ENCODE measurements at regions of chr4 and their contacts with region 1.

Region 1: DNA sequence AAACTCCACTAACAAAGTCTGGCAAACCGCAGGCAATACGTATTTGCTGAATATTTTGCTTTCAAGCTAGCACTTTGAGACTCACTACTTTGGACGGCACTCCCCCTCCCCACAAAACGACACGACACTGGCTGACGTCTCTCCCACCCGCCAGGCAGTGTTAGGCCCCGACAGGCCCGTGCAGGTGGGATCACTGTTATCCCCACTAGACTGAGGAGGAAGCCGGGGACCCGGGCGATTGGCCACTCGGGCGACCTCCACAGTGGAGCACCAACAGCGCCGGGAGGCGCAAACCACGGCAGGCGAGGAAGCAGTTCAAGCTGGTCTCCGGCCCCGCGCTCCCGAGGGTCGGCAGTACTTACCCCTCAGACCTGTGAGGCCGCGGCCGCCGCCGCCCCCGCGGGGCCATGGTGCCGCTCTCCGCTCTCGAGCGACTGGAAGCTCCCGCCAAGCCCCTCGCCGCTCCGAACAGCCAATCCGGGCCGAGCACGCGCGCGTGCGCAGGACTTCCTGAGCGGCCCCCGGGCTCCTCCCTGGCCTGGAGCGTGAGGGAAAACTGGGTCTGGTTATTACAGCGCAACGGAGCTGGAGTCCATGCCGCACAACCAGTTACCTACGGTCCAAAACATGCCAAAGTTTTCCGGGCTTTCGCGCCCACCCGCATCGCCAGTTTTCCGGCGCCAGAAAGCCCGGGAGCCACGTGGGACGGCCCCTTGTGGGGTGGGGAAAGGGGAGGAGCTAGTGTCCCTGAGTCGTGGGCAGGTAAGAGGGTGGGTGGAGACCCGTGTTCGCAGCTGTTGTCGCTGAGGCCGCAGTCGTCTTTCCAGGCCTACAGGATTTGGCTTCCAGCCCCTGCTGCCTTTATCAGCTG is at the start of gene CENPU:
- DNase-seq: peak; percentile 89 to 98 (median 94)
- ATAC-seq: peak; percentile 98
- H3K4me3 ChIP-seq: peak within 1 kb of the TSS; percentile 82
- H3K4me3 Mint-ChIP-seq: peak within 1 kb of the TSS; percentile 84 to 98 (median 89)
- H3K27ac ChIP-seq: peak within 1 kb of the TSS; percentile 66
- H3K27ac Mint-ChIP-seq: peak within 1 kb of the TSS; percentile 60 to 96 (median 89)
- H3K4me1 ChIP-seq: peaks cover 7 to 11% of the 10 kb centered on the region in 2 donors
- H3K4me1 Mint-ChIP-seq: peaks cover 4 to 50% (median 20%) of the 10 kb centered on the region in 7 donors
- H3K27me3 ChIP-seq: no peaks in the 10 kb centered on the region
- H3K27me3 Mint-ChIP-seq: no peaks in the 10 kb centered on the region
- total RNA-seq, gene CENPU: 1.1 to 43.8 (median 3.1) TPM

Region 2: DNA sequence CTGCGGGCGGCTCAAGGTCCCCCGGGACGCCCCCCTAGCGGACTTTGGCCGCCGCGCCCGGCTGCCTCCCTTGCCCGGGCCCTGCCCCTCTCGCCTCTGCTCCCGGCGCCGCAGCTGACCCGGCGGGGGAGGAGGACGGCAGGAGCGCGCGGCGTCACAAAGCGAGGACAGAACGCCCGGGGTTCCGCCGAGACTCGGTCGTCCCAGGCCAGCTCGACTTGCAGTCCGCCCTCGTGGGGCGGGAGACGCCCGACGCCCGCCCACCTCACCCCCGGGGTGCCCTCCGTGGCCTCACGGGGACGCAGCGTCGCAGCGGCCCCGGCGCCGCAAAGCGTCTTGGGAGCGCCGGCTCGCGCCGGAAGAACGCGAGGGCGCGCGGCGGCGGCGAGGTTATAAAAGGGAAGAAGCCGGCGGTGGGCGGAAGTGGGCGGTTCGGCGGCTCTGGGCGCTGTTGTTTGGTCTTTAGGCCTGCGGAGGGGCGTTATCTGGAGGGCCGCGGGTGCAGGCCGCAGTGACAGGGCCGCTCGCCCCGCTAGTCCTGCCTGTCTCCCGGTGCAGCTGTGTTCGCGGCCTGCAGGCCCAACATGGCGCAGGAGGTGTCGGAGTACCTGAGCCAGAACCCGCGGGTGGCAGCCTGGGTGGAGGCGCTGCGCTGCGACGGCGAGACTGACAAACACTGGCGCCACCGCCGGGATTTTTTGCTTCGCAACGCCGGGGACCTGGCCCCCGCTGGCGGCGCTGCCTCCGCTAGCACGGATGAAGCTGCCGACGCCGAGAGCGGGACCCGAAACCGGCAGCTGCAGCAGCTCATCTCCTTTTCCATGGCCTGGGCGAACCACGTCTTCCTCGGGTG is 1289.4 kb before region 1 on chr4 and contains the start of gene CDKN2AIP:
- CTCF ChIA-PET with region 1: no interaction called
- POLR2A ChIA-PET with region 1: no interaction called
- intact Hi-C with region 1: loop called (anchors 2 to 5 kb)
- DNase-seq: peak; percentile 92 to 97 (median 95)
- ATAC-seq: peak; percentile 93
- H3K4me3 ChIP-seq: peak within 1 kb of the TSS; percentile 81
- H3K4me3 Mint-ChIP-seq: peak within 1 kb of the TSS; percentile 94 to 99 (median 97)
- H3K27ac ChIP-seq: peak within 1 kb of the TSS; percentile 96
- H3K27ac Mint-ChIP-seq: peak within 1 kb of the TSS; percentile 97 to 98 (median 98)
- H3K4me1 ChIP-seq: peaks cover 30 to 33% of the 10 kb centered on the region in 2 donors
- H3K4me1 Mint-ChIP-seq: peaks cover 35 to 66% (median 51%) of the 10 kb centered on the region in 7 donors
- H3K27me3 ChIP-seq: no peaks in the 10 kb centered on the region
- H3K27me3 Mint-ChIP-seq: peaks cover 0 to 5% (median 0%) of the 10 kb centered on the region in 5 donors
- total RNA-seq, gene CDKN2AIP: 24.9 to 58.2 (median 44.4) TPM

Region 3: GRCh38 chr4:184719407-184719806 is 14.5 kb before region 1 on chr4:
- CTCF ChIA-PET with region 1: no interaction called
- POLR2A ChIA-PET with region 1: no interaction called
- intact Hi-C with region 1: loop called in 1 of 2 experiments (anchors 2 kb)
- DNase-seq: no peak
- ATAC-seq: no peak
- H3K4me3 ChIP-seq: no peak overlapping the region
- H3K4me3 Mint-ChIP-seq: no peak overlapping the region
- H3K27ac ChIP-seq: no peak overlapping the region
- H3K27ac Mint-ChIP-seq: no peak overlapping the region
- H3K4me1 ChIP-seq: no peaks in the 10 kb centered on the region
- H3K4me1 Mint-ChIP-seq: peaks cover 0 to 51% (median 0%) of the 10 kb centered on the region in 7 donors
- H3K27me3 ChIP-seq: no peaks in the 10 kb centered on the region
- H3K27me3 Mint-ChIP-seq: no peaks in the 10 kb centered on the region

Region 4: DNA sequence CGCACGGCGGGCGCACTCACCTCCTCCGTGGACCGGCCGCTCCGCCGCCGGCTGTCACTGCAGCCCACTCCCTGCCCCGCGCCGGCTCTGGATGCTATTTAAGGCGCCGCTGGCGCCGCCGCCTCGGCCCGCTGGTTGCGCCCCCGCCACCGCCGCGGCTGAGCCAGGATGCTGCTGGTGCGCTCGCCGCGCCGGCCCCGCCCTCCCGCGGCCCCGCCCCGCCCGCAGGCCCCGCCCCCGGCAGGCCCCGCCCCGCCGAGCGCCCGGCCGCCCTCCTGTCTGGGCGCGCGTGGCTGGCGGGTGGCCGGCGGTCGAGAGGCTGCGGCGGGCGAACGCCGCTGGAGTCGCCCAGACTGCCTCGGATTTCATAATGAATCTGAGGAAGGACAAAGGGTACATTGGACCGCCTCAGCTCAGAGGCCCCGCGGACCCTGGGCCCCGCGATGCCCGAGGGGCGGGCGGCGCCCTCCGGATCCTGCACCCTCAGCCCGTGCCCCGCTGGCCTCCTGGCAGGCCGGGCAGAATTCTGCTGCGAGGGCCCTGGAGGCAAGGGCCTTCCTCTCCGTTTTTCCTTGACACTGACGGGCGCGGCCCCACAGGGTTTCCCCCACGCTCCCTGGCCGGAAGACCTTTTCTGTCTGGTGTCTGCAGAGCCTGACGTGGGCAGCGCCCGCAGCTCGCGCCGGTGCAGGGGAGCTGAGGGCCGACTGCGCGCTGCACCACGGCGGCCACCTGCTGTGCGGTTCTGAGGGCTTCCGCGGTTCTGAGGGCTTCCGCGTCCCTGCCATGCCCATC is 92.2 kb after region 1 on chr4 and contains the start of gene ACSL1:
- CTCF ChIA-PET with region 1: no interaction called
- POLR2A ChIA-PET with region 1: no interaction called
- intact Hi-C with region 1: loop called (anchors 1 kb)
- DNase-seq: peak; percentile 63 to 83 (median 75)
- ATAC-seq: peak; percentile 95
- H3K4me3 ChIP-seq: peak within 1 kb of the TSS; percentile 59
- H3K4me3 Mint-ChIP-seq: peak within 1 kb of the TSS; percentile 89 to 94 (median 91)
- H3K27ac ChIP-seq: peak within 1 kb of the TSS; percentile 73
- H3K27ac Mint-ChIP-seq: peak within 1 kb of the TSS; percentile 79 to 91 (median 90)
- H3K4me1 ChIP-seq: peaks cover 4 to 7% of the 10 kb centered on the region in 2 donors
- H3K4me1 Mint-ChIP-seq: peaks cover 21 to 46% (median 33%) of the 10 kb centered on the region in 7 donors
- H3K27me3 ChIP-seq: no peaks in the 10 kb centered on the region
- H3K27me3 Mint-ChIP-seq: peaks cover 0 to 25% (median 0%) of the 10 kb centered on the region in 5 donors
- total RNA-seq, gene ACSL1: 9.5 to 80.1 (median 20.4) TPM

Region 5: DNA sequence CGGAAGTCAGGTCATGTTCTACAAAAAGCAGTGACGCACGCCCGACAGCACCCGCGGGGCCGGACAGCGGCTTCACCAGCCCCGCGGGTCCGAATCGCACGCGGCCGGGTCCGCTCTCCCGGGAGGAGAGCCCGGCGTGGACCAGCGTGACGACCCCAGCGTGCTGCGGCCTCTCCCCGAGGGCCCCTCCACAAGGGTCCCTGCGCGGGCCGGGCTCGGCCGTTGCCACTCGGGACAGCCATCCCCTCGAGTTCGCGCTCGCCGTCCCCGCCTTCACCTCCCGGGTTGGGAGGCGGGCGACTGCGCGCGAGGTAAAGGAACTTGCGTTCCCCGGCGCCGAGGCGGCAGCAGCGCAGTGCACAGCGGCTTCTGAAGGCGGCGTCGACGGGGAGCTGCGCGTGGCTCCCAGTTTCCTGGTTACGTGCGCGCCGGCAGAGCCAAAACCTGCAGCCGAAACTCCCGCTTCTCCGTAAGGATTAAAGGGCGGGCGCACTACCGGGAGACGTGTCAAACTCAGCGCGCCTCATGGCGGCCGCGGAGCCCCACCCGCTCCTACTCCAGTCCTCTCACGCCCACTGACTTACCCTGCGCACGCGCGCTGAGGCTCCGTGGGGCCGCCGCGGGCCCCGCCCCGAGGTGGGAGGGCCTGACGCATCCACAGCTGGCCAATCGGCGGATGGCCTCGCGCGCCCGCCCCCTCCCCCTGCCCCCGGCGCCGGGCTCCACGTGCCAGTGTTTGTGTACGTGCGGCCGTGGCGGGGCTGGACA is 662.3 kb after region 1 on chr4:
- CTCF ChIA-PET with region 1: no interaction called
- POLR2A ChIA-PET with region 1: no interaction called
- intact Hi-C with region 1: loop called in 1 of 2 experiments (anchors 10 kb)
- DNase-seq: peak; percentile 93 to 100 (median 97)
- ATAC-seq: peak; percentile 97
- H3K4me3 ChIP-seq: peak overlapping the region; percentile 69
- H3K4me3 Mint-ChIP-seq: peak overlapping the region; percentile 82 to 100 (median 97)
- H3K27ac ChIP-seq: peak overlapping the region; percentile 97
- H3K27ac Mint-ChIP-seq: peak overlapping the region; percentile 90 to 100 (median 99)
- H3K4me1 ChIP-seq: peaks cover 12 to 15% of the 10 kb centered on the region in 2 donors
- H3K4me1 Mint-ChIP-seq: peaks cover 14 to 57% (median 27%) of the 10 kb centered on the region in 7 donors
- H3K27me3 ChIP-seq: no peaks in the 10 kb centered on the region
- H3K27me3 Mint-ChIP-seq: no peaks in the 10 kb centered on the region

Region 6: GRCh38 chr4:186191200-186192065 is 1457.5 kb after region 1 on chr4 and contains the start of gene CYP4V2:
- CTCF ChIA-PET with region 1: no interaction called
- POLR2A ChIA-PET with region 1: no interaction called
- intact Hi-C with region 1: loop called in 1 of 2 experiments (anchors 5 kb)
- DNase-seq: peak; percentile 68 to 94 (median 90)
- ATAC-seq: peak; percentile 90
- H3K4me3 ChIP-seq: peak within 1 kb of the TSS; percentile 91
- H3K4me3 Mint-ChIP-seq: peak within 1 kb of the TSS; percentile 89 to 97 (median 94)
- H3K27ac ChIP-seq: peak within 1 kb of the TSS; percentile 95
- H3K27ac Mint-ChIP-seq: peak within 1 kb of the TSS; percentile 94 to 99 (median 98)
- H3K4me1 ChIP-seq: peaks cover 12 to 19% of the 10 kb centered on the region in 2 donors
- H3K4me1 Mint-ChIP-seq: peaks cover 34 to 62% (median 56%) of the 10 kb centered on the region in 7 donors
- H3K27me3 ChIP-seq: no peaks in the 10 kb centered on the region
- H3K27me3 Mint-ChIP-seq: no peaks in the 10 kb centered on the region
- total RNA-seq, gene CYP4V2: 19.7 to 41.4 (median 26.0) TPM